Ovary (tissue), 10 donors: ENCODE measurements at regions of chr5 and their contacts with region 1.

Region 1: DNA sequence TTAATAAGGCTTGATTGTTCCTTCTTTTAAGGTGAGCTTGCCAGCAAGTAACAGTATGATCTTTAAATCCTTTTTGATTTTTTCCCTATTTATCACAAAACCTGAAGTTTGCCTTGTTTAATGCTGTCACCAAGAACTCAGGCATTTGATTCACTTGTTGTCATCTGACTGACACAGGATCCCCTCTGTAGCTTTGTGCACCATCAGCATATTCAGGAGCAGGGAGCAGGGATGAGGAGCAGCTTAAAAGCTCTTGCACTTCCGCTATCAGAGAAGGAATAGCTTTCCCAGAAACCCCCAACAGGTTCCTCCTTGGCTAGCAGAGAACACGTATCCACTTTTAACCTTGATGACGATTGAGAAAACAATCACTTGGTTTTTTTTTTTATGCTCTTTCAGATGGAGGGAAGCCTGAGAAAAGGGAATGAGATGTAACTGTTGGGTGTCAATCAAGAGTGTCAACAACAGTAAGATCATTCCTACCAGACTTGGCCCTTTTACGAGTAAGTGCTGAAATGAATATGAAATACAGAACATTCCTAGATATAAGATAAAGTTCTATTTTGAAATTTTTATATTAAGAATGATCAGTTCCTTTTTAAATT is 433.1 kb upstream of the CDH18 start:
- DNase-seq: no peak
- H3K4me3 ChIP-seq: no peak overlapping the region
- H3K27ac ChIP-seq: no peak overlapping the region
- H3K4me1 ChIP-seq: no peaks in the 10 kb centered on the region
- H3K27me3 ChIP-seq: no peaks in the 10 kb centered on the region
- CTCF ChIP-seq: no peak
- EP300 ChIP-seq: no peak
- POLR2A ChIP-seq: no peak

Region 2: GRCh38 chr5:20340127-20340526 is 81.0 kb before region 1 on chr5:
- intact Hi-C with region 1: no loop called
- DNase-seq: no peak
- H3K4me3 ChIP-seq: no peak overlapping the region
- H3K27ac ChIP-seq: no peak overlapping the region
- H3K4me1 ChIP-seq: no peaks in the 10 kb centered on the region
- H3K27me3 ChIP-seq: no peaks in the 10 kb centered on the region
- CTCF ChIP-seq: no peak
- EP300 ChIP-seq: no peak
- POLR2A ChIP-seq: no peak

Region 3: DNA sequence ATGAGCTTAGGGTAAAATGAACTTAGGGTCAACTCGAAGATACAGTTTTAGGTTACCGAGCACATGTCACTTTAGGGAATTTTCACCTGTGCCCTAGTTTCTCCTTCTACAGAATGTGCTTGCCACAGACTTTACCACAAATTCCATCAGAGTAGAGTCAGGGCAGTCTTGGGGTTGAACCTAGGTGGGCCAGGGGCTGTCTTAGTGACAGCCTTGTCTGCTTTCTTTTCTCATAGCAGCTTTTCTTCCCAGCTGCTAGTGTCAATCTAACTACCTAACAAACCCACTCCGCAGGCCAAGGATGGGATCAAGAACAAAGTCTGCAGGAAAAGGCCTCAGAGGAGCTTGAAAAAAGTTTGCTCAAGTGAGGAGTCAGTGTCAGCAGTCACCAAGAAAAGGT is 25.0 kb after region 1 on chr5:
- intact Hi-C with region 1: loop called in 1 of 4 experiments (anchors 2 kb)
- DNase-seq: no peak
- H3K4me3 ChIP-seq: no peak overlapping the region
- H3K27ac ChIP-seq: no peak overlapping the region
- H3K4me1 ChIP-seq: no peaks in the 10 kb centered on the region
- H3K27me3 ChIP-seq: no peaks in the 10 kb centered on the region
- CTCF ChIP-seq: no peak
- EP300 ChIP-seq: no peak
- POLR2A ChIP-seq: no peak